ENCODE measurements at regions of chr2 and their contacts with region 1.

Region 1: DNA sequence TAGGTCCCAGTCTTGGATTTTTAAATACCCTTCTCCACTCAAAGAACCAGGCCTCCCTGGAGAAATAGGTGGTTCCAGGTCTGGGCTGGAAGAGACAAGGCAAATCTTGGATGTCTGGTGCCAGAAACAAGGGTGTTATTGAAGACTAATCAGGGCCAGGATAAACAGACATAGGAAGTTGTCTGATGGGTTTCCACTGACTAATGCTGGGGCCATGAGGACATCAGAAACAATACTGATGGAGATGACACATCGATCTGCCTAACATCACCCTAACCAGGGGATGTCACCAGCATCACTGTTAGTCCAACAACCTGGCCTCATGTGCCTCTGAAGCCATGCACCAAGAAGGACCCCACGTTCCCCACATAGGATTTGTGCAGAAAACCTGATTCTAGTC is 42.5 kb upstream of the GLI2 start:
- DNase-seq: no peak
- H3K4me3 Mint-ChIP-seq: no peak overlapping the region
- H3K27ac Mint-ChIP-seq: no peak overlapping the region
- H3K4me1 Mint-ChIP-seq: peaks cover 5% of the 10 kb centered on the region
- H3K27me3 Mint-ChIP-seq: peaks cover 29% of the 10 kb centered on the region
- CTCF ChIP-seq: no peak

Region 2: DNA sequence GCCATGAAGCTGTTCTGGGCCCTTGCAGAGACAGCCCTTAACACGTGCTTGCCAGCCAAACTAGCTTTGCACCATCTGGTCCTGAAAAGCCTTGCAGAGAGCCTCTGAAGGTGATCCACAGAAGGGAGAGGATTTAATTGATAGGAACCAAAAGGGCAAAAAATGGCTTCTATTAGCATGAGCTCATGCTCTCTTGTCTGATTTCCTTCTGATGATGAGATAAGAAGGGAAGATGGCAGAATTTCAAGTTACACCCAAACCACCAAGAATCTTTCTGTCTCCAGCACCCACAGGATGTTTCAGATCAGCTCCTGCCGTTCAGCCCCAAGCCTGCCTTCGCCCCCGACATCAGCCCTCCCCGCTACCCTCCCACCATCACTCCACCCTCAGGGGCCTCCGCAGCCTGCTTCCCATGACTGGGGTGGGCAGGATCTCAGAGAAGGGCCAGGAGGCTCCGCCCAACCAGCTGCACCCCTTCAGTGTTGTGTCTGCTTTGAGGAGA is 19.1 kb after region 1 on chr2:
- CTCF ChIA-PET with region 1: interaction called, 23 read pairs
- POLR2A ChIA-PET with region 1: no interaction called
- intact Hi-C with region 1: no loop called
- DNase-seq: no peak
- H3K4me3 Mint-ChIP-seq: no peak overlapping the region
- H3K27ac Mint-ChIP-seq: no peak overlapping the region
- H3K4me1 Mint-ChIP-seq: peaks cover 5% of the 10 kb centered on the region
- H3K27me3 Mint-ChIP-seq: no peaks in the 10 kb centered on the region
- CTCF ChIP-seq: no peak

Region 3: DNA sequence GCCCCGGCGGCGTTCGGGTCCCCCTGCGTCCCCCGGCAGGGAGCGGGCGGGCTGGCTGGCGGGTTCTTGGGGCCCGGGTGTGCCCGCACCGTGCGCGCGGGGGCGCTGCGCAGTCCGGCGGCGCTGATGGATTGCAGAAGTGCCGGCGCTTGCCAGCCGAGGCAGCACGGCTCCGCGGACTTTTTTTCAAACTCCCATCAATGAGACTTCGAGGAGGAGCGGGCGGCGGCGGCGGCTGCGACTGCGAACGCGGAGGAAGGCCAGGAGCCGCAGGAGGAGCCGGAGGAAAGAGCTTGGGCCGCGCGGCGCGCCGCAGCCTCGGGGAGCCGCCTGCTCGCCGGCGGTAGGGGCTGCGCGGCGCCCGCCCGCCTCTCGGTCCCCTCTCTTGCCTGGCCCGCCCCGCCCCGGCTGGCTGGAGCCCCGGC is 42.6 kb after region 1 on chr2 and contains the start of gene GLI2:
- CTCF ChIA-PET with region 1: interaction called, 4 read pairs
- POLR2A ChIA-PET with region 1: no interaction called
- intact Hi-C with region 1: loop called (anchors 2 kb)
- DNase-seq: peak; percentile 70
- H3K4me3 Mint-ChIP-seq: peak within 1 kb of the TSS; percentile 79
- H3K27ac Mint-ChIP-seq: no peak within 1 kb of the TSS
- H3K4me1 Mint-ChIP-seq: no peaks in the 10 kb centered on the region
- H3K27me3 Mint-ChIP-seq: peaks cover 41% of the 10 kb centered on the region
- CTCF ChIP-seq: peak; percentile 79
- total RNA-seq, gene GLI2: 0.61 and 0.74 TPM in 2 replicates

Region 4: GRCh38 chr2:120949027-120949956 is 256.2 kb after region 1 on chr2:
- CTCF ChIA-PET with region 1: interaction called, 3 read pairs
- POLR2A ChIA-PET with region 1: no interaction called
- intact Hi-C with region 1: loop called (anchors 1 kb)
- DNase-seq: peak; percentile 47
- H3K4me3 Mint-ChIP-seq: no peak overlapping the region
- H3K27ac Mint-ChIP-seq: no peak overlapping the region
- H3K4me1 Mint-ChIP-seq: no peaks in the 10 kb centered on the region
- H3K27me3 Mint-ChIP-seq: no peaks in the 10 kb centered on the region
- CTCF ChIP-seq: peak; percentile 29

Region 5: GRCh38 chr2:121064186-121064585 is 371.1 kb after region 1 on chr2:
- CTCF ChIA-PET with region 1: interaction called, 129 read pairs
- POLR2A ChIA-PET with region 1: no interaction called
- intact Hi-C with region 1: no loop called
- DNase-seq: no peak
- H3K4me3 Mint-ChIP-seq: no peak overlapping the region
- H3K27ac Mint-ChIP-seq: no peak overlapping the region
- H3K4me1 Mint-ChIP-seq: no peaks in the 10 kb centered on the region
- H3K27me3 Mint-ChIP-seq: peaks cover 45% of the 10 kb centered on the region
- CTCF ChIP-seq: no peak

Region 6: DNA sequence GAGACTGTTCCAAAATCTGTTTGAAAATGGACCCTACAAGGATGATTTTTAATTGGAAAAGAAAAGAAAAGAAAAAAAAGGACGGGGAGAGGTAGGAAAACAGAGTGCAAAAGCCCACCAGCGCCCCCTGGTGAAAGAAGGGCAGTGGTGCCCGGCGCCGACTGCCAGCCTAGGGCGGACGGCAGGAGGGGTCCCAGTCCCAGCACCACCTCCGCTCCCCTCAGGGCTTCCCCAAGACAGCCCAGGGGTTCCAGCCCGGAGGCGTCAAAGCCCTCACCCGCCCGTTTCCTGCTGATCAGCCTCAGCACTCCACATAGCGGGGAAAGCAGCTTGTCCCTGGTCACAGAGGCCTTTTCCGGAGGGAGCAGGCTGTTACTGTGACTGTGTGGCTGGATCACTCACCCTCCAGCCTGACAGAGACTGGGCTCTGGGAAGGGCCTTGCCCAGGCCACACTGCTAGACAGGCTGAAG is 377.9 kb after region 1 on chr2:
- CTCF ChIA-PET with region 1: interaction called, 541 read pairs
- POLR2A ChIA-PET with region 1: interaction called, 3 read pairs
- intact Hi-C with region 1: loop called (anchors 1 kb)
- DNase-seq: peak; percentile 68
- H3K4me3 Mint-ChIP-seq: no peak overlapping the region
- H3K27ac Mint-ChIP-seq: no peak overlapping the region
- H3K4me1 Mint-ChIP-seq: no peaks in the 10 kb centered on the region
- H3K27me3 Mint-ChIP-seq: peaks cover 2% of the 10 kb centered on the region
- CTCF ChIP-seq: peak; percentile 88

Measured in MCF 10A (cell line).